H1 (cell line): ENCODE measurements at regions of chr19 and their contacts with region 1.

Region 1: DNA sequence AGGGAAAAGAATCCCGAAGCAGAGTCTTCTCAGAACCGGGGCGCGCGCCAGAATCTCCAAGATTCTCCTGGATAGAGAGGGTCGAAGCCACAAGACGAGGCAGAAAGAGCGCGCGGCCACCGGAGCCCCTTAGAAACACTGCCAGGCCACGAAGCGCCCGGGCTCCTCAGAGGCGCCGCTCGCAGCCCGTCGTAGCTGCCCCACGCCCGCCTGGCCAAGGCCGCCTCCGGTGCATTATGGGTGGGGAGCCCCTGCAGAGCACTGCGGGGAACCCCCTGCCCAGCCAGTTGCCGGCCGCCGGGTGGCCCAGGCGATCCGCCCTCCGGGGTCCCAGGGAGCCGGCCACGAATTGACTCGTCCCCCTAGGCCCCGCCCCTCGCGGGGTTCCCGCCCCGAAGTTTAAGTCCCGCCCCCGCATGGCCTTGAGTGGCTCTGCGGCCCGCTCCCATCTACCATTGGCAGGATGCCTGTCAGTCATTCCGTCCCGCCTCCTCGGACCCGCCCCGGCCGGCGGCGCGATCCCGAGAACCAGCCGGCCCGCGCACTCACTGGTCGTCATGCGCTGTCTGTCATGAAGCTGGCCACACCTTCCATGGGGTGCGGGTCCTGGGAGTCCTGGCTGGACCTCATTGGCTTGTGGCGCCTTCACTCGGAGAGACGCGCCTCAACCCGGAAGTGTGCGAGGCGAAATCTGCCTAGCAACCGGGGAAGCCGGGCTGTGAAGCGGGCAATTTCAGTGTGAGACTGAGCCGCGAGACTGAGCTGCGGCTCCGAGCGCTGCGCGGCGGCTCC is 20.2 kb upstream of the GATAD2A start:
- DNase-seq: peak; percentile 99 to 100
- H3K4me3 ChIP-seq: peak overlapping the region; percentile 57 to 96 (median 82)
- H3K27ac ChIP-seq: peak overlapping the region; percentile 62; the same call in 1 of the 2 replicates
- H3K4me1 ChIP-seq: peaks cover 4 to 8% (median 5%) of the 10 kb centered on the region in 4 experiments; a peak in 6 of 7 replicates
- H3K27me3 ChIP-seq: peaks cover 0 to 3% (median 3%) of the 10 kb centered on the region in 4 experiments; a peak in 2 of 7 replicates
- CTCF ChIP-seq: no peak
- EP300 ChIP-seq: no peak
- POLR2A ChIP-seq: peak; percentile 80 to 87
- RAD21 ChIP-seq: no peak

Region 2: GRCh38 chr19:19399733-19400433 is 14.6 kb after region 1 on chr19:
- CTCF ChIA-PET with region 1: interaction called, 5 read pairs
- POLR2A ChIA-PET with region 1: interaction called, 21 read pairs
- DNase-seq: no peak
- H3K4me3 ChIP-seq: no peak overlapping the region
- H3K27ac ChIP-seq: no peak overlapping the region
- H3K4me1 ChIP-seq: peaks cover 0 to 2% (median 0%) of the 10 kb centered on the region in 4 experiments; a peak in 3 of 7 replicates
- H3K27me3 ChIP-seq: no peaks in the 10 kb centered on the region
- CTCF ChIP-seq: no peak
- EP300 ChIP-seq: no peak
- POLR2A ChIP-seq: no peak
- RAD21 ChIP-seq: no peak